Panc1 (cell line): ENCODE measurements at regions of chr16 and their contacts with region 1.

Region 1: DNA sequence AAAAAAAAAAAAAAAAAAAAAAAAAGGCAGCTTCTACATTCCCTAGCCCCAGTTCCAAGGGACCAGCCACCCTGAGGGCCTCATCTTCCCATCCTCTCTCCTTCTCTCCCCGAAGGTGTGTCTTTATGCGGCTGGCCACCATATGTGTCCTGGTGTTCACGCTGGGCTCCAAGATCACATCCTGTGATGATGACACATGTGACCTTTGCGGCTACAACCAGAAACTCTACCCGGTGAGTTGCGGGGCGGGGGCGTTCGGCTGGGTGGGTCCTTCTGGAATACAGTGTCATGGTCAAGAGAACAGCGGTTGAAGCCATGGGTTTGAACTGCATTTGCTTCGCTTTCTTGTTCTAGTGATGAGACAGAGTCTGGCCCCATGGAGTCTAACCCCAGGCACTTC is 22.6 kb upstream of the COQ7 start:
- DNase-seq: no peak
- ATAC-seq: no peak
- H3K4me3 ChIP-seq: no peak overlapping the region
- H3K27ac ChIP-seq: no peak overlapping the region
- H3K4me1 ChIP-seq: no peaks in the 10 kb centered on the region
- H3K27me3 ChIP-seq: no peaks in the 10 kb centered on the region
- CTCF ChIP-seq: no peak

Region 2: DNA sequence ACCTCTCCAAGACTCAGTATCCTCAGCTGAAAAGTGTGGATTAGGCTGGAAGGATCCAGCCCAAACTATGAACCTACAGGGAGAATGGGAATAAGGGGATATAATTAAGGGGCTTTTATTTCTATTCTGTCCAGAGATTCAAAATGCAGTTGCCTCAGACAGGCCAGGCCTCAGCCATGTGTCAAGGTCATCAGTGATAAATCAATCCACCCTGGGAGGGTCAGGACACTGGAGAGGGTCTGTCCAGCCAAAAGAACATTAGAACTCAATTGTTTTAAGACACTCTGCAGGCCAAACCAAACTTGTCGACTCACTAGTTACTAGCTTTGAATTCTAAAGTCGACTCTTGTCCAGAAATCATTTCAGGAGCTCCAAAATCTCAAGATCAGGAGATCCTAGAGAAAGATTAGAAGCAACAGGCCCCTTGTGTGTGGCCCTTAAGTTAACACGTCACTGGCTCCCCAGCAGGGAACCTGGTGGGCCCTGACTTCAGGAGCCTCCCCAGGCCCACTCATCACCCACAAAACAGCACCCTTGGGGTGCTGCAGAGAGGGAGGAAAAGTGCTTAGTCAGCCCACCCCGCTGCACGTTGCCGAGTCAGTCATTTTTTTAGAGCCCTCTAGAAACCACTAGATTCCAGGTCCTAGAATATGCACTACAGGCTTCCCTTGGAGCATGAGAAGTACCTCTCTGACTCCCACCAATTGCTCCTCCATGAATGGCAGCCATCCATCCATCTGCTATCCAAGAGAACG is 1730.8 kb before region 1 on chr16:
- CTCF ChIA-PET with region 1: no interaction called
- POLR2A ChIA-PET with region 1: interaction called, 10 read pairs
- in situ Hi-C with region 1: no loop called
- intact Hi-C with region 1: no loop called
- DNase-seq: no peak
- ATAC-seq: no peak
- H3K4me3 ChIP-seq: no peak overlapping the region
- H3K27ac ChIP-seq: no peak overlapping the region
- H3K4me1 ChIP-seq: no peaks in the 10 kb centered on the region
- H3K27me3 ChIP-seq: peaks cover under 1% of the 10 kb centered on the region; the same call in 1 of the 2 replicates
- CTCF ChIP-seq: no peak

Region 3: DNA sequence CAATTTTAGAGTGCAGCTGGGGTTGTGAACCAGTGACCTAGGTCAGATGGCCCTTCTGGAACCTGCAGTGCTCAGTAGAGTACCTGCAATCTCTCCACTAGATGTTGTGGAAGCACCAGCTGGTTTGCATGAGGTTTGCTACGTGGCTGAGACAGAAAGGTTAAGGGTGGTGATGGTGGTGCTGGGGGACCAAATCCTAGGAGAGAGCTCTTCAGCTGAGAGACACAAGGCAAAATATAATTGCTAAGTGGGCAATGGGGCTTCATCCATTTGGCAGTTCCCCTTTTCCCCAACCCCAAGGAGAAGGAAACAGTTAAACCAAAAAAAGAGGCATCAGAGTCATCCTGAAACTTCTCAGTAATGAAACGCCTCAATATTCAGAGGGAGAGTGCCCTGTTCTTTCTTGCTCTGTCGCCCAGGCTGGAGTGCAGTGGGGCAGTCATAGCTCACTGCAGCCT is 82.9 kb after region 1 on chr16:
- CTCF ChIA-PET with region 1: no interaction called
- POLR2A ChIA-PET with region 1: no interaction called
- in situ Hi-C with region 1: no loop called
- intact Hi-C with region 1: no loop called
- DNase-seq: no peak
- ATAC-seq: no peak
- H3K4me3 ChIP-seq: no peak overlapping the region
- H3K27ac ChIP-seq: no peak overlapping the region
- H3K4me1 ChIP-seq: peaks cover 38% of the 10 kb centered on the region
- H3K27me3 ChIP-seq: no peaks in the 10 kb centered on the region
- CTCF ChIP-seq: no peak

Region 4: GRCh38 chr16:19146883-19147525 is 102.2 kb after region 1 on chr16:
- CTCF ChIA-PET with region 1: no interaction called
- POLR2A ChIA-PET with region 1: no interaction called
- in situ Hi-C with region 1: no loop called
- intact Hi-C with region 1: no loop called
- DNase-seq: no peak
- ATAC-seq: no peak
- H3K4me3 ChIP-seq: no peak overlapping the region
- H3K27ac ChIP-seq: no peak overlapping the region
- H3K4me1 ChIP-seq: no peaks in the 10 kb centered on the region
- H3K27me3 ChIP-seq: 0 out of 2 replicates have a peak, but pooled peaks cover 2% of the 10 kb centered on the region
- CTCF ChIP-seq: no peak

Region 5: DNA sequence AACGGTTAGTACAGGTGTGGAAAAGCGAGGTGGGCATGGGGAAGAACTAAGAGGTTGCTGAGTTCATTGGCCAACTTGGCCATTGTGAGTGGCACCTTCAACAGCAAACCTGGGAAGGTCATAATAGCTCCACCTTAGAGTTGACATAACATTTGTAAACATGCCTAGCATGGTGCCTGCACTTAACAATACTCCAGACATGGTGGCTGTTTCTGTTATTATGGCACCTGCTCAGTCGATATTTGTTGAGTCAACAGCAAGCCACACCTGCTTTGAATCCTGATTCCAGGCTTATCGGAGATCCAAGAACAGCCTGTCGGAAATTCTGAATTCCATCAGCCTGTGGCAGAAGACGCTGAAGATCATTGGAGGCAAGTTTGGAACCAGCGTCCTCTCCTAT is 418.7 kb after region 1 on chr16:
- CTCF ChIA-PET with region 1: no interaction called
- POLR2A ChIA-PET with region 1: no interaction called
- in situ Hi-C with region 1: no loop called
- intact Hi-C with region 1: no loop called
- DNase-seq: no peak
- ATAC-seq: no peak
- H3K4me3 ChIP-seq: no peak overlapping the region
- H3K27ac ChIP-seq: no peak overlapping the region
- H3K4me1 ChIP-seq: no peaks in the 10 kb centered on the region
- H3K27me3 ChIP-seq: no peaks in the 10 kb centered on the region
- CTCF ChIP-seq: no peak